GM18951 (cell line): ENCODE measurements at regions of chr1 and their contacts with region 1.

Region 1: GRCh38 chr1:153990468-153991150 is at the start of gene RPS27:
- POLR2A ChIP-seq: peak; percentile 100

Region 2: GRCh38 chr1:153510984-153511410 is 479.6 kb before region 1 on chr1:
- in situ Hi-C with region 1: loop called (anchors 25 kb)
- POLR2A ChIP-seq: no peak

Region 3: DNA sequence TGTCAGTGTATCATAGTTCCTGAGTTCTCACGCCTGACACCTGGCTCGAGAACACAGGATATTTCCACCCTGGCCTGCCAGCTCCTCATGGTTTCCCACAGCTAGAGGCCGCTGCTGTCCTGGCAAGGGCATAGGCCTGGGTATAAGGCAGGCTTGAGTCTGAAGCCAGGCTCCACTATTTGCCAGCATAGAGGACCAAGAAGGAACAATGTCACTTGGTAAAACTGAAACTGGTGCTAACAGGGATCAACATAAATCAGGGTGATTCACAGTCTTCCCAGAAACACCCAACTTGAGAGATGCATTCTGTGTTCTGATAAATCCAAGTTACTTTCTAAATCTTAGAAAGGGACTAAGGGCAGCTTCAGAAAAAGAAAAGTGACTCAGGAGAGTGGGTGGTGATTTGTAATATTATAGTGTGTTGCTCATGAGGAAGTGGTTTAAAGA is 418.0 kb before region 1 on chr1:
- in situ Hi-C with region 1: no loop called
- POLR2A ChIP-seq: no peak

Region 4: DNA sequence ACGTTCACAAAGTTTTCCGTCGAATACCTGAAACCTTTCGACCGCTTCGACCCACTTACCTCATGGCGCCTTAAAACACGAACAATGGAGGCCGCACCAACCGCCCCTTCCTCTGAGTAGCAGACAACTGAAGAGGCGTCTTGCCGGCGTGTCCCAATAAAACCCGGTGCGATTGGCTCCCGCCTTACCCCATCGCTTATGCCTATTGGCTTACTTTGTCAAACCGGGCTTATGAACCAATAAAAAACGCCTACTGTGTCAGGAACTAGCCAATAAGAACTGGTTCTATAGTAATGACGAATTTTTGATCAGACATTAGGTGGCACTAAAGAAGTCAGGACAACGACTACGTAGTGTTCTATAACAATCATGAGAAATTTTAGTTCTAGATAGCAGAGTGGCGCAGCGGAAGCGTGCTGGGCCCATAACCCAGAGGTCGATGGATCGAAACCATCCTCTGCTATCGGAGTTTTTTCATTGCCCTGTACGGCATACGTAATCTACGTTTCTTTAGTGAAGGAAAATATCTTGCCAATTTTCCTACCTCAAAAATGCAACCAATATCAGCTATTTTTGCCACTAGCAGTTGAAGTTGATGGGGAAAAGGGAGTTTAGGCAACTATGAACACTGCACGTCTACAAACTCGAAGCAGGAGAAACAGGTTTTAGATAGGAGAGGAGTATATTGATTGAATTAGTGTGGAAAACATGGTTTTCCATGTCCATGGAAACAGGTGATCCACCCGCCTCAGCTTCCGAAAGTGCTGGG is 319.6 kb before region 1 on chr1 and contains the start of gene ILF2:
- in situ Hi-C with region 1: loop called (anchors 10 kb)
- POLR2A ChIP-seq: peak; percentile 83

Region 5: DNA sequence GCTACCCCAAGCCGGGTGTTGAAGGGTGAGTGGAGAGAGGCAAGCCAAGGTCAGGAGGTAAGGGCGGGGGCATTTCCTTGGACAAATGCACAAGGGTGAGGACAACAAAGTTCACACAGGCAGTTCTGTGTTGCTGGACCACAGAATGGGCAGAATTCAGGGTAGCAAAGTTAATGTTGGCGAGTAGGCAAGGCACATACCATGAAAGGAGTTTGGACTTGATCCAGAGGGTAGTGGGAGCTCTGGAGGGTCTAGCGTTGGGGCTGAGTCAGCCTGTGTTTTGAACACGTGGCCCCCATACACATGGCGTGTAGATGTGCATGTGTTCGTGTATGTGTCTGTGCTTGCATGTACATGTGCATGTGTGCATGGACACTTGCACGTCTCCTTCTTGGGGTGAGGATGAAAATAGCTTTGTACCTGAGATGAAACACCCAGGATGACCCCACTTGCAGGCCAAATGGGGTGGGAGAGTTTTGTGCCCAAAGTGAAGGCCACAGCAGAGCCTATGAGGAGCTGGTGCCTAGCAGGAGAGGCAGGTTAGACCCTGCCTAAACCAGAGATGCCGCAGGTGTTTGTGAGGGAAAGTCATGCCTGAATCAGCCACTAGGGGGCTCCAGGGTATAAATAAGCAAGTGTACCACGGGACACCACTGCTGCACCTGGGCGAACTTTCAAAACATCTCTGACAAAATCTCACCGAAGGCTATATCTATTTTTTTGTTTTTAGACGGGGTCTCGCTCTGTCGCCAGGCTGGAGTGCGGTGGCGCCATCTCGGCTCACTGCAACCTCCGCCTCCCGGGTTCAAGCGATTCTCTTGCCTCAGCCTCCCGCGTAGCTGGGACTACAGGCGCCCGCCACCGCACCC is 193.6 kb before region 1 on chr1:
- in situ Hi-C with region 1: loop called (anchors 10 kb)
- POLR2A ChIP-seq: no peak

Region 6: DNA sequence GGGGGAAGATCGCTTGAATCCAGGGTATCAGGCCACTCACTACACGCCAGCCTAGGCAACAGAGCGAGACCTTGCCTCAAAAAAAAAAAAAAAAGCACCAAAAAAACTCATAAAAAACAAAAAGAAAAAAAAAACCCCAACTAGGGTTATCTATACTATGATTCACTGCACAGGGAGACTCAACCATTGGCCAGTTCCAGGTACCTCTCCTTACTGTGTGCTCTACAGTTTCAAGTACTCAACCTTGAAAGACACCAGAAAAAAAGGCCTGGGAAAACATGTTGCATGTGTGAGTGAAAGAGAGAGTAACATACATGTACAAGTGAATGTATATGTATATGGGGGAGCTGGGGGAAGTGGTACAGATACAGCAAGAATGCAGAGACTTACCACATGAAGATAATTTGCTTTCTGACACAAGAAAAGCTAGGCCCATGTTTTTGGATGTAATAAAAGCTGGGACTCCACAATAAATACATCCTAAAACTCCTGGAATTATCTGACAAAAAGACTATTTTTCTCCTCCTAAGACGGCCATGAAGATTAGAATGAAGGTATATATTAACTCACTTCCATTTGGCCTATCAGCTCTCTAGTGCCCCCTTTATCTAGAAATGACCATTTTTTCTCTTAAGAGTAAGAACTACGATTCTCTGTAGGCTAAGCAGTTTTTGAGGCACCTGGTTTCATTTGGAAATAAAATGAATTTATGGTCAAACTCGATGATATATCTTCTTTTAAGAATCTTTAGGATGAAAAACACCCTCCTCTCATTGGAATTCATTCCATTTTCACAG is 163.2 kb before region 1 on chr1:
- in situ Hi-C with region 1: loop called (anchors 10 kb)
- POLR2A ChIP-seq: no peak

Region 7: GRCh38 chr1:154129391-154129970 is 138.9 kb after region 1 on chr1:
- in situ Hi-C with region 1: no loop called
- POLR2A ChIP-seq: no peak